CD4-positive, alpha-beta T cell (primary cell): ENCODE measurements at regions of chr12 and their contacts with region 1.

Region 1: DNA sequence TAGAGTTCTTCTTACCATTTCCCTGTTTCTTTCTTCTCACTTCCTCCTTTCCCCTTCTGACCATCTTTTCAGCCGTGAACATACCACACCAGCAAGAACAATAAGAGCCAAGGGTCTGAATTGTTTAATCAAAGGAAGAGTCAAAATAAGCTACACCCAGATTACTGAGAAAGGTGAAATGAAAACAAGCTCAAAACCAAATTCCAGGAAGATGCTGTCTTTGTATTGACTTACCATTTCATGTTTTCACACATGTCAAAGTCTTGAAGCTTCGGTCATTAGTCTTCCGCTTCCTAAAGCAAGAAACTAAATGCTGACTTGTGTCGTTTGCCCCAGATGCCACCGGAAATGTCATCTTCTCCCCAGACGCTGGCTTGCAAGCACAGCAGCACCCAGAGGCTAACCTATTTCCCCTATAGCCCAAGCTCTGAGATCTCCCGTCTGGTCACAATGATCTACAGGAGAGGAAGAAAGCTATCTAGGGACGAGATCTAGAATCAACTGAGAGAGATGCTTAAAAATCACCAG is 136.5 kb upstream of the AMIGO2 start:
- DNase-seq: peak; percentile 34 to 92 (median 64)
- ATAC-seq: peak; percentile 57
- H3K4me3 ChIP-seq: peak overlapping the region; percentile 71
- H3K4me3 Mint-ChIP-seq: peak overlapping the region; percentile 99
- H3K27ac ChIP-seq: peak overlapping the region; percentile 43 to 68
- H3K27ac Mint-ChIP-seq: peak overlapping the region; percentile 96
- H3K4me1 ChIP-seq: peaks cover 32% of the 10 kb centered on the region
- H3K4me1 Mint-ChIP-seq: peaks cover 78% of the 10 kb centered on the region
- H3K27me3 ChIP-seq: no peaks in the 10 kb centered on the region
- H3K27me3 Mint-ChIP-seq: no peaks in the 10 kb centered on the region
- CTCF ChIP-seq: no peak

Region 2: DNA sequence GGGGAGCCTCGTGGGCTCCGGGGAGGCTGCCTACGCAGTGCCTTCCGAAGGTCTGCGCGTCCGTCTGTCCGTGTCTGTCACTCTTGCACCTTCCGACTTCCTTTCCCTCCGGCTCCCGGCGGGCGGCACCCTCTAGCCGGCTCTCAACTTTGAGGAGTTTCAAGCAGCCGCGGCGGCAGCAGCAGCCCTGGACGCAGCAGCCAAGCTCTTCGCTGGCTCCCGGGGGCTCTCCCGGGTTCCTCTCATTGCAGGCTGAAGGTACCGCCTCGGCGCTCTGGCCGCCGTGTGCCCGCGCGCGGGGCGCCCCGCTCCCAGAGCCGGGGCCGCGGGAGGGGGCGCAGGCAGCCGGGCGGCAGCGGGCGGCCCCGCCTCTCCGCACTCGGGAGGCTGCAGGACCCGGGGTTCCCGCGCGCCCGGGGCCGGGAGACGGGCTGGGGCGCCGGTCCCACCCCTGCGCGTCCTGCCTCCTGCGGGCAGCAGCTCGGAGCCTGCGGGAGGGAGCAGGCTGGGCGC is 136.7 kb before region 1 on chr12 and contains the starts of genes AMIGO2 and PCED1B:
- CTCF ChIA-PET with region 1: interaction called, 3 read pairs
- POLR2A ChIA-PET with region 1: interaction called, 18 read pairs
- intact Hi-C with region 1: loop called (anchors 2 to 5 kb)
- DNase-seq: peak; percentile 30 to 79 (median 62)
- ATAC-seq: peak; percentile 52
- H3K4me3 ChIP-seq: peak within 1 kb of the TSS; percentile 84
- H3K4me3 Mint-ChIP-seq: peak within 1 kb of the TSS; percentile 95
- H3K27ac ChIP-seq: peak within 1 kb of the TSS; percentile 50 to 80
- H3K27ac Mint-ChIP-seq: peak within 1 kb of the TSS; percentile 98
- H3K4me1 ChIP-seq: peaks cover 34% of the 10 kb centered on the region
- H3K4me1 Mint-ChIP-seq: peaks cover 86% of the 10 kb centered on the region
- H3K27me3 ChIP-seq: no peaks in the 10 kb centered on the region
- H3K27me3 Mint-ChIP-seq: no peaks in the 10 kb centered on the region
- CTCF ChIP-seq: peak; percentile 37
- total RNA-seq, gene AMIGO2: 9.7 to 10.1 TPM
- total RNA-seq, gene PCED1B: 18.7 to 20.0 TPM

Region 3: DNA sequence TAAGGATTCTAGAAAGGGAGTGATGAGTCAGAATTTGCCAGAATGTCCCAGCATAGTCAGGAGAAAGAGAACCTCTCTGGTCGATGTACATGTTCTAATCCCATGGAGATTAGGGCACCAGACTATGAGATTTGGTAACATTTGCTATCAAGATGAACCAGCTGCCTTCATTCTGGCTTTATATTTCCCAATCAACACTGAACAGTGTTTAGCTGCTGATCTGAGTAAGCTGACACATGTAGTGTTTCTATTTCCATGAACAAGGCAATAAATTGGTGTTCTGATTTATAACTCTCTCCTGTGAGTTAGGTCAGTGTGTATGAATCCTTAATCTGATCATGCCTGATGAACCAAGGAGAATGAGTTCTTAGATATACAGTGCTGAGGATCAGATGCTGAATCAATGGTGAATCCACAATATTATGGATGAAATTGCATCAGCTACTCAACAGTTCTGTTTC is 21.6 kb after region 1 on chr12:
- CTCF ChIA-PET with region 1: no interaction called
- POLR2A ChIA-PET with region 1: interaction called, 10 read pairs
- intact Hi-C with region 1: no loop called
- DNase-seq: no peak
- ATAC-seq: no peak
- H3K4me3 ChIP-seq: no peak overlapping the region
- H3K4me3 Mint-ChIP-seq: peak overlapping the region; percentile 16
- H3K27ac ChIP-seq: no peak overlapping the region
- H3K27ac Mint-ChIP-seq: peak overlapping the region; percentile 84
- H3K4me1 ChIP-seq: peaks cover 33% of the 10 kb centered on the region
- H3K4me1 Mint-ChIP-seq: peaks cover 64% of the 10 kb centered on the region
- H3K27me3 ChIP-seq: no peaks in the 10 kb centered on the region
- H3K27me3 Mint-ChIP-seq: no peaks in the 10 kb centered on the region
- CTCF ChIP-seq: no peak

Region 4: DNA sequence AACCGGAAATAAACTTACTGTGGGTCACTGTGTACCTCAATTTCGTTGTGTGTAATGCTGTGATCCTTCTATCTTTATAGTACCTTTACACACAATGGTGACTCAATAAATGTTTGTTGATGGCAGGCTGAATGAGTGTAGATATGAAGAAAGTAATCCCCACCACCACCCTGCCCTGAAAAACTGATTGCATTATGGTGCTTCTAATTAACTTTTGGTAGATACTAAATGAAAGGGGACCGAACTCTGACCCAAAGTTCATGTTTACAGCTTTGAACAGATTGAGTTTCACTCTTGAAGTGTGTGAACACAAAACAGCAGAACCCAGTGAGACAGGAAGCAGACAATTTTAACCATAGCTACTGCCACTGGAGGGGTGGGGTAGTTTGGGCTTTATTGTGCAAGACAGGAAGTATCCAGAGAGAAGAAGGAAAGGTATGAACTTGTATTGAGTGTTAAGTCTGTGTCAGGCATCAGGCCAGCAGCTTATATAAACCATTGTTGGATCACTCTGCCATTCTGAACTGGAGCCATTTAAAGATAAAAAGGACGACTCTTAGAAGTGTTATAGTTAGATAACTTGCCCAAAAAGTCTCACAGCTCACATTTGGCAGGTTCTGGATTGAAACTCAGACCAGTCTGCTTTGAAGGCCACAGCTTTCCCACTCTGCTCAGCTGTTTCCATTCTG is 60.6 kb after region 1 on chr12:
- CTCF ChIA-PET with region 1: no interaction called
- POLR2A ChIA-PET with region 1: interaction called, 70 read pairs
- intact Hi-C with region 1: loop called in 1 of 2 experiments (anchors 2 kb)
- DNase-seq: peak; percentile 26 to 94 (median 50)
- ATAC-seq: peak; percentile 96
- H3K4me3 ChIP-seq: no peak overlapping the region
- H3K4me3 Mint-ChIP-seq: peak overlapping the region; percentile 61
- H3K27ac ChIP-seq: peak overlapping the region; percentile 72 to 81
- H3K27ac Mint-ChIP-seq: peak overlapping the region; percentile 90
- H3K4me1 ChIP-seq: peaks cover 40% of the 10 kb centered on the region
- H3K4me1 Mint-ChIP-seq: peaks cover 83% of the 10 kb centered on the region
- H3K27me3 ChIP-seq: no peaks in the 10 kb centered on the region
- H3K27me3 Mint-ChIP-seq: no peaks in the 10 kb centered on the region
- CTCF ChIP-seq: no peak

Region 5: DNA sequence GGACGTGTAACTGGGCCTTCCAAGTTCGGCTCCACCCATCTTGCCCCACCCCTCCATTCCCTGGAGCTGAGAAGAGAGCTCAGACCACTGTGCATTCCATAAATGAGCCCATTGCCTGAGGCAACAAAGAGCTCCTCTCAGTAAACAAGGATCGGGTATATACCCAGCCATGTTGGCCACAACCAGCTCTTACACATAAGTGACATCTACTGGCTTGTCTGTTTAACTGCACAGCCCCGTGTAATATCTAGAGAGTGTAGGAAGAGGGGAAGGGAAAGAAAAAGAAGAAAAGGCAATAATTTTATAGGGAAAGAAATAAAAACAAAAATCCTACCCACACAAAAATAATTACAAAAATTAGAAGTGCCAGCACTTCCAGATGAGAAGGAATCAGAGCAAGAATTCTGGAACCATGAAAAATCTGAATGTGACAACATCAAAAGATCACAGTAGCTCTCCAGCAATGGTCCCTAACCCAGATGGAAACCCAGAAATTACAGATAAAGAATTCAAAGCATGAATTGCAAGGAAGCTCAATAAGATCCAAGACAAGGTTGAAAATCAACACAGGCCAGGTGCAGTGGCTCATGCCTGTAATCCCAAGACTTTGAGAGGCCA is 181.6 kb after region 1 on chr12:
- CTCF ChIA-PET with region 1: interaction called, 14 read pairs
- POLR2A ChIA-PET with region 1: interaction called, 11 read pairs
- intact Hi-C with region 1: loop called in 1 of 2 experiments (anchors 5 kb)
- DNase-seq: peak in 11 of 14 experiments; percentile 5 to 80 (median 33)
- ATAC-seq: peak; percentile 91
- H3K4me3 ChIP-seq: no peak overlapping the region
- H3K4me3 Mint-ChIP-seq: peak overlapping the region; percentile 49
- H3K27ac ChIP-seq: peak overlapping the region in 1 of 2 donors; percentile 23
- H3K27ac Mint-ChIP-seq: peak overlapping the region; percentile 63
- H3K4me1 ChIP-seq: peaks cover 40% of the 10 kb centered on the region
- H3K4me1 Mint-ChIP-seq: peaks cover 53% of the 10 kb centered on the region
- H3K27me3 ChIP-seq: no peaks in the 10 kb centered on the region
- H3K27me3 Mint-ChIP-seq: no peaks in the 10 kb centered on the region
- CTCF ChIP-seq: peak; percentile 66

Region 6: DNA sequence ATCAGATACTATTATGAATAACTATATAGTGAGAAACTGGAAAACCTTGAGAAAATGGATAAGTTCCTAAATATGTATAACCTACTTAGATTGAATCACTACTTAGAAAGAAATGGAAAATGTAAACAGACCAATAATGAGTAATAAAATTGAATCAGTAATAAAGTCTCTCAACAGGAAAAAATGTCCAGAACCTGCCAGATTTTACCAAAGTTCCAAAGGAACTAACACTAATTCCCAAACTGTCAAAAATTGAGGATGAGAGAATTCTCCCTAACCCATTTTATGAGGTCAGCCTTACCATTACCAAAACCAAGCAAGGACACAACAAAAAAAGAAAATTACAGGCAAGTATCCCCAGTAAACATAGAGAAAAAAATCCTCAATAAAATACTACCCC is 217.7 kb after region 1 on chr12:
- CTCF ChIA-PET with region 1: no interaction called
- POLR2A ChIA-PET with region 1: no interaction called
- intact Hi-C with region 1: no loop called
- DNase-seq: no peak
- ATAC-seq: no peak
- H3K4me3 ChIP-seq: no peak overlapping the region
- H3K4me3 Mint-ChIP-seq: no peak overlapping the region
- H3K27ac ChIP-seq: no peak overlapping the region
- H3K27ac Mint-ChIP-seq: no peak overlapping the region
- H3K4me1 ChIP-seq: no peaks in the 10 kb centered on the region
- H3K4me1 Mint-ChIP-seq: no peaks in the 10 kb centered on the region
- H3K27me3 ChIP-seq: no peaks in the 10 kb centered on the region
- H3K27me3 Mint-ChIP-seq: no peaks in the 10 kb centered on the region
- CTCF ChIP-seq: no peak